ENCODE measurements at regions of chr20 and their contacts with region 1.

Region 1: DNA sequence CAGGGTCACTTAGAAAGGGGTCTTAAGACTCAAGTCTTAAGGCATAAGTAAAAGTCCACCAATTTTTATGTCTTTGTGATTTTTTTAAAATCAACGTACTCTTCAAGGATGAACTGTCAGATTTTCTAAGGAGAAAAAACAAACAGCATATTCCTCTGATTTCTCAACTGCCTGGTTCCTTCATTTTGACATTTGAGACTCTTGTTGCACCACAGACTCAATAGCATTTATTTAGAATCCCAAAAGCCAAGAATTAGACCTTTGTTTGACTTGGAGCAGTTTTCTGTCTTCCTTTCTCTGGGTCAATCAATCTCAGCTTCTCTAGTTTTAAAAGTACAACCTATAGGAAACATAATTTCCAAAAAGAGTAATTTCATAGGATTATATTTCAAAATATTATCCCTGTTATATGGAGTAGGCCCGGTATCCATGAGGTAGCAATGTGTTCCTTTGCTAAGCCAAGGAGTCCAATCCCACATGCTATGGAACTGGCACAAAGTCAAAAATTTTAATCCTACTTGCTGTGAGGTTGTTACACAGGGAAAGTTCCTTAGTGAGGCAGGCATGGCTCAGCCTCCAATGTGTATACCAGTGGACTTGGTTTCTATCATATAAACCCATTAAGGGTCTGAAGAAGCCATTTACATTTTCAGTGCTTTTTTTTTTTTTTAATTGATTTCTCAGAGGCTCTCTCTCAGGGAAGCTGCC is 405.7 kb downstream of the KIF16B start:
- DNase-seq: no peak
- H3K4me3 ChIP-seq: no peak overlapping the region
- H3K27ac ChIP-seq: no peak overlapping the region
- H3K4me1 ChIP-seq: no peaks in the 10 kb centered on the region
- H3K27me3 ChIP-seq: no peaks in the 10 kb centered on the region
- CTCF ChIP-seq: no peak
- POLR2A ChIP-seq: no peak

Region 2: DNA sequence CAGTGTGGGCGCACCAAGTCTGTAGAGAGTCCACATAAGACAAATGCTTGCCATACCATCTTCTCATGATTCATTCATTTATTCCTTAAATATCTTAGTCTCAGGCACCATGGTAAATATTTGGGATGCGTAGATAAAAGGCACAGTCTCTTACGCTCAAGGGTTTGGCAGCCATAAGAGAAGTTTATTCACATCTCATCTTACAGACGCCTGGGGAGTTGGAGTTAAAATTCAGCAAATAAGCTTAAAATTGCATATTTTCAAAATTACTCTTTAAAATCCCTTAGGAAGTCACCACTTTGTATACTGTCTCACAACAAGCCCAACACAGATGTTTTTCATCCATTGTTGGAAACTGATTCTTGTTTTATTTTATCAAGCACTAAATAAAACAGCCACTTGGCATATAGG is 42.4 kb after region 1 on chr20:
- intact Hi-C with region 1: loop called (anchors 10 kb)
- DNase-seq: no peak
- H3K4me3 ChIP-seq: no peak overlapping the region
- H3K27ac ChIP-seq: no peak overlapping the region
- H3K4me1 ChIP-seq: no peaks in the 10 kb centered on the region
- H3K27me3 ChIP-seq: no peaks in the 10 kb centered on the region
- CTCF ChIP-seq: no peak
- POLR2A ChIP-seq: no peak